Naive thymus-derived CD8-positive, alpha-beta T cell (primary cell): ENCODE measurements at regions of chr2 and their contacts with region 1.

Region 1: DNA sequence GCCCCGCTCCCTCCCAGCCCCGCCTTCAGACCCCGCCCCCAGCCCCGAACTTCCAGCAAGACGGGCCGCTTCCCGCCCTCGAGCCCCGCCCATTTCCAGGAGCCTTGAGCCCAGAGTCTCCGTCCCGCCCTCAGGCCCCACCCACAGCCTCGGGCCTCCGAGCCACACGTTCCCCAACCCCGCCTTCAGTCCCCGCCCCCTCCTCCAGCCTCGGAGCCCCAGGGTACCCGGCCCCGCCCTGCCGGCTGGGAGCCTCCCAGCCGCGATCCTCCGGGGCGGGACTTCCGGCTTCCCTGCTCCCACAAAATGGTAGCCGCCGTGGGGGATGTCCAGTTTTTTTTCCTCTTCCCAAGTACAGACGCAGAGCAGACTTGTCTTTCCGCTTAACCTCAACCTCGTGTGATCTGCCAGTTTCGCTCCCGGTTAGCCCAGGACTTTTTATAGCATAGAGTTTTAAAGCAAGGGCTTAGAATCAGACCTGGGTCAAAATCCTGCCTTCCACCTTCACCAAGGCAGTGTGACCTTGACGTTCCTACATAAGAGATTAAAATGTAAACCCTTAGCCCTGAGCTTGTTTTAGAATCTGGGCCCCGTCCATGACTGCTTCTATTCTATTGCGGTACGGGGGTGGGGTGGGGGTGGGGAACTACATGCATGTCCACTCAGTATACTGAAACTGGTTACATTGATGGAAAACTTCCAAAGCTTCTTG is 435 bp upstream of the GPR155 start:
- DNase-seq: peak; percentile 60 to 98 (median 86)
- ATAC-seq: peak; percentile 67 to 71
- H3K4me3 Mint-ChIP-seq: peak overlapping the region; percentile 90 to 100 (median 98)
- H3K27ac Mint-ChIP-seq: peak overlapping the region; percentile 87 to 98 (median 94)
- H3K4me1 Mint-ChIP-seq: peaks cover 26 to 79% (median 72%) of the 10 kb centered on the region in 4 donors
- H3K27me3 Mint-ChIP-seq: no peaks in the 10 kb centered on the region

Region 2: DNA sequence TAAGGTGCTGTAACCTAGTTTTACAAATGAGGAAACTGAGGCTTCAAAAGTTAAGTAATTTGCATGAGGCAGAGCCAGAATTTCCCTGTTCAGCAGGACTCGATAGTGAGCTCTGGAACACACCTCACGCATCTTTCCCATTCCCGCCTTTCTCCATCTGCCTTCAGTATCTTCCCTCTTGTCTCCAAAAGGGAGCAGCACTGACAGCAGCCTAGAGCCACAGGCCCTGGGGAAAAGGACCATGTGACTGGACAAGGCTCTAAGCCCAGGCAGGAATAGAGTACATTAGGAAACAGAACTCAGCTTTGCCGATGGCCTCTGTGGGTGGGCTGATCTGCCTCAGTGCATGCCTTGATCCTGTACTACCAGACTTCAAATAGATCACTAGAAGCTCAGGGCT is 21.9 kb before region 1 on chr2:
- POLR2A ChIA-PET with region 1: interaction called, 11 read pairs
- DNase-seq: no peak
- ATAC-seq: no peak
- H3K4me3 Mint-ChIP-seq: no peak overlapping the region
- H3K27ac Mint-ChIP-seq: peak overlapping the region in 3 of 10 donors; percentile 21 to 69 (median 53)
- H3K4me1 Mint-ChIP-seq: peaks cover 0 to 2% (median 0%) of the 10 kb centered on the region in 4 donors
- H3K27me3 Mint-ChIP-seq: no peaks in the 10 kb centered on the region

Region 3: DNA sequence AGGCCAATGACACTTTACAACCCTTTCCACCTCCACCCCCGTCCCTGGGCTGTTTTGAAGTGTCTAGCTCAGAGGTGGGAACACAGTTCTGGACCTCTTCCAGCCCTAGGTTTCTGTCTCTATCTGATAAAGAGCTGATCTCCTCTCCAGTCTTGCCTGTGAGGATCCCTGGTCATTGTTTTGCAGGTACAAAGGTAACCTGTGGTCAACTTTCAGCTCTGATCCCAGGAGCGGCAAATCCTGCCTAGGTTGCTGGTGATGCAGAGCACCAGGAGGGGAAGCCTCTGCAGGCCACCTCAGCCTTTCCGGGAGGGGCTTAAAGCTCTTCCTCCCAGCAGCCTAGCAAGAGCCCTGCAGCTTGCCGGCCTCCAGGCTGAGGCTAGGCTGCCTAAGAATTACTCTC is 180.1 kb after region 1 on chr2:
- POLR2A ChIA-PET with region 1: no interaction called
- DNase-seq: no peak
- ATAC-seq: peak; percentile 57 to 67
- H3K4me3 Mint-ChIP-seq: peak overlapping the region in 7 of 10 donors; percentile 19 to 74 (median 46)
- H3K27ac Mint-ChIP-seq: peak overlapping the region in 6 of 10 donors; percentile 39 to 82 (median 58)
- H3K4me1 Mint-ChIP-seq: peaks cover 14 to 56% (median 29%) of the 10 kb centered on the region in 4 donors
- H3K27me3 Mint-ChIP-seq: no peaks in the 10 kb centered on the region

Region 4: DNA sequence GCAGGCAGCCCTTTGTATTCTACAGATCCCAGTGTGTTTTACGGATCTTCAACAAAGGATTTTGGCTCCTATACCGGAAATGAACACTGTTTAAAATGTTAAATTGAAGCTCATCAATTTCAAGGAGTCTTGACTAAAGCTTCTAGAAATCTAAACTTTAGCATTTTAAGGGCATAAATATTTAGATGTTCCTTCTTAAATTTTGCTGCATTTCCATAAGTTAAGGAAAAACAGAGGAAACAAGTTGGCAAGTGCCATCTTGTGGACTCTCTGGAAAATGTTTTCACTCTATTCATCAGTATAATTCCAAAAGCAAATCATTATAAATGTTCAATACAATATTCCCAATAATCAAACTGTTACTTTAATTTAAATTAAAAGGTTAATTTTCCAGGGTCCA is 498.4 kb after region 1 on chr2:
- POLR2A ChIA-PET with region 1: no interaction called
- DNase-seq: no peak
- ATAC-seq: no peak
- H3K4me3 Mint-ChIP-seq: no peak overlapping the region
- H3K27ac Mint-ChIP-seq: no peak overlapping the region
- H3K4me1 Mint-ChIP-seq: peaks cover 2 to 7% (median 5%) of the 10 kb centered on the region in 4 donors
- H3K27me3 Mint-ChIP-seq: peaks cover 0 to 15% (median 0%) of the 10 kb centered on the region in 5 donors